ENCODE measurements at regions of chr21 and their contacts with region 1.

Region 1: GRCh38 chr21:25607151-25608043 is at the start of gene MRPL39:
- DNase-seq: peak; percentile 88
- H3K4me3 Mint-ChIP-seq: peak within 1 kb of the TSS; percentile 87
- H3K27ac Mint-ChIP-seq: peak within 1 kb of the TSS; percentile 97
- H3K4me1 Mint-ChIP-seq: peaks cover 16% of the 10 kb centered on the region
- H3K27me3 Mint-ChIP-seq: no peaks in the 10 kb centered on the region
- CTCF ChIP-seq: peak; percentile 68
- total RNA-seq, gene MRPL39: 29.2 and 37.1 TPM in 2 replicates

Region 2: GRCh38 chr21:25421327-25422028 is 185.9 kb before region 1 on chr21:
- CTCF ChIA-PET with region 1: interaction called, 3 read pairs
- POLR2A ChIA-PET with region 1: no interaction called
- intact Hi-C with region 1: loop called (anchors 1 kb)
- DNase-seq: peak; percentile 64
- H3K4me3 Mint-ChIP-seq: no peak overlapping the region
- H3K27ac Mint-ChIP-seq: no peak overlapping the region
- H3K4me1 Mint-ChIP-seq: peaks cover 10% of the 10 kb centered on the region
- H3K27me3 Mint-ChIP-seq: peaks cover 11% of the 10 kb centered on the region
- CTCF ChIP-seq: peak; percentile 55

Region 3: GRCh38 chr21:25515484-25516405 is 91.7 kb before region 1 on chr21:
- CTCF ChIA-PET with region 1: no interaction called
- POLR2A ChIA-PET with region 1: no interaction called
- intact Hi-C with region 1: no loop called
- DNase-seq: no peak
- H3K4me3 Mint-ChIP-seq: no peak overlapping the region
- H3K27ac Mint-ChIP-seq: no peak overlapping the region
- H3K4me1 Mint-ChIP-seq: peaks cover 9% of the 10 kb centered on the region
- H3K27me3 Mint-ChIP-seq: no peaks in the 10 kb centered on the region
- CTCF ChIP-seq: no peak

Region 4: DNA sequence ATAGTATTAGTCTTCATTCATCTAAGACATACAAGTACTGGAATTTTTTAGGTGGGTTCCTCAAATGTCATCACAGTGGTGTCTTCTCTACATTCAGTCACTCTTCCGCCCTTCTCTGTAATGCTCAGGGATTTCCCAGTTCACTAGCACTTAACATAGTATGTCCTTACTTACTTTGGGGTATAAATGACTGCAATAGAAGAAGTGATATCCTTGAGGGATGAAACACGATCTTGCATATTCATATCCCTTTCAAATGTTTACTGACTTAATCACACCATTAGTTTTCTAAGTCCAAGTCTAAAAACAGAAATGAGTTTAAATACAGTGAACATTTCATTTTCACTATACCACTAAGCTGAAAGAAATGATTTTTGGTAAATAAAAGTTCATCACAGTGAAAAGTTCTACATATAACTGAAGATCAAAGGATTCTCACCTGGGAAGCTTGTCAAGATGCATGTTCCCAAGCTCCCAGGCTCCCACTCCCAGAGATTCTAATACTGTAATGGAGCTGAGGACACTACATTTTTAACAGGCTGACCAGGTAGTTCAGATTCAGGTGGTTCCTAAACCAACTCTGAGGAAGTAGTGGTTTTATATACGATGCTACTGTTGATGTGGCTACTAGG is 29.9 kb before region 1 on chr21:
- CTCF ChIA-PET with region 1: no interaction called
- POLR2A ChIA-PET with region 1: no interaction called
- intact Hi-C with region 1: no loop called
- DNase-seq: no peak
- H3K4me3 Mint-ChIP-seq: no peak overlapping the region
- H3K27ac Mint-ChIP-seq: no peak overlapping the region
- H3K4me1 Mint-ChIP-seq: peaks cover 5% of the 10 kb centered on the region
- H3K27me3 Mint-ChIP-seq: no peaks in the 10 kb centered on the region
- CTCF ChIP-seq: no peak

Region 5: DNA sequence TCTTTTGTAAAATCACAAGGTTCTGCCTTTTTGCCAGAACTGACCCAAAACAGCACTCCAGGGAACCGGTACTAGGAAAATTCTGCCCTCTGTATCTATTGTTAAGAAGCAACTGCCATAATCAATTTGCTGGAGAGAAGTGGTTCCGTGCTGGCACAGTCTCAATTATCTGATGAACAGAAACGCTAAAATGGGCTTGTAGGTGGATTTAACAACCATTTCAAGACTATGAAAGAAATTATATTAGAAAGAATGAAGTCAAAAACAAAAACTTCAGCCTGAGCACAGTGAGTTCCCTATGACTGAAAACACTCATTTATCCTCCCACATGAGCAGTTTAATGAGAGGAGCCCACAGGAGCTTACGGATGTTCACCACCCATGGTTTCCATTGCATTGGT is 36.1 kb after region 1 on chr21:
- CTCF ChIA-PET with region 1: interaction called, 11 read pairs
- POLR2A ChIA-PET with region 1: no interaction called
- intact Hi-C with region 1: no loop called
- DNase-seq: no peak
- H3K4me3 Mint-ChIP-seq: no peak overlapping the region
- H3K27ac Mint-ChIP-seq: no peak overlapping the region
- H3K4me1 Mint-ChIP-seq: peaks cover 13% of the 10 kb centered on the region
- H3K27me3 Mint-ChIP-seq: peaks cover 24% of the 10 kb centered on the region
- CTCF ChIP-seq: no peak

Region 6: DNA sequence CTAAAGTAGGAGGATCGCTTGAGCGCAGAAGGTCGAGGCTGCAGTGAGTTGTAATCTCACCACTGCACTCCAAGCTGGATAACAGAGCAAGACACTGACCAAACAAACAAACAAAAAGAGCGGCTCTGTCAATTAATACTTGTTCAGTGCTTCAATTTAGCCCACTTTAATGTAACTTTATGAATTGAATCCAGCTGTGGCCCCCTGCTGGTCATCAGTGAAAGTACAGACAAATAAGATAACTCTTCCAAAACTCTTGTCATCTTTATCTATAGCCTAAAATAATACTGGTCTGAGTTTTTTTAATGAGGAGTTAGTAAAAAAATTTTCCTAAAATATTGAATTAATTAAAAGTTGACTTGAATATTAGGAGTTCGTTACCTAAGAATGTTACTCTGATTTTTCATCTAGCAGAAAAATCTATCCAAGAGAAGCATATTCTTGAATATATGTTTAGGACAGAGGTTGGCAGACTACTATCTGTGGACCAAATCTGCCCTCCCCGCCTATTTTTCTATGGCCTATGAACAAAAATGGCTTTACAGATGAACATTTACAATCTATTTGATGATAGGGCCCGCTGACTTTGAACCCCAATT is 101.2 kb after region 1 on chr21:
- CTCF ChIA-PET with region 1: interaction called, 63 read pairs
- POLR2A ChIA-PET with region 1: interaction called, 3 read pairs
- intact Hi-C with region 1: loop called (anchors 1 kb)
- DNase-seq: peak; percentile 57
- H3K4me3 Mint-ChIP-seq: no peak overlapping the region
- H3K27ac Mint-ChIP-seq: no peak overlapping the region
- H3K4me1 Mint-ChIP-seq: no peaks in the 10 kb centered on the region
- H3K27me3 Mint-ChIP-seq: no peaks in the 10 kb centered on the region
- CTCF ChIP-seq: peak; percentile 67

Region 7: DNA sequence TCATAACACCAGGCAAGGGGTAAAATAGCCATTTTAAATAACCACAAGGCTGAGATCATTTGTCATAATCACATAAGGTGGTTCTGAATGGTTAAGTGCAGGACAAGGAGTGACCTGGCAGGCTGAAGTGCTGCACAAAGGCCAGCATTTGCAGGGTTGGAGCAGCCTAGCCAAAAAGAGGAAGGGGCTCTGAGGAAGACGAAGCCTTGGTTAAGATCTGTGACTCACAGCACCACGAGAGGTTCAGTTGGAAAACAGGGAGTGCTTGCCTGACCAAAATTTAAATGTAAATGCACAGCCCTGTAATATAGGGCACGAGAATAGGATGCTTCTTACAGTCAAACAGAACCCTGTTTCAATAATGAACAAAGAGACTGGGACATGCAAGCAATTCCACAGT is 115.2 kb after region 1 on chr21:
- CTCF ChIA-PET with region 1: interaction called, 15 read pairs
- POLR2A ChIA-PET with region 1: interaction called, 6 read pairs
- intact Hi-C with region 1: no loop called
- DNase-seq: no peak
- H3K4me3 Mint-ChIP-seq: no peak overlapping the region
- H3K27ac Mint-ChIP-seq: no peak overlapping the region
- H3K4me1 Mint-ChIP-seq: peaks cover 4% of the 10 kb centered on the region
- H3K27me3 Mint-ChIP-seq: no peaks in the 10 kb centered on the region
- CTCF ChIP-seq: no peak

Region 8: DNA sequence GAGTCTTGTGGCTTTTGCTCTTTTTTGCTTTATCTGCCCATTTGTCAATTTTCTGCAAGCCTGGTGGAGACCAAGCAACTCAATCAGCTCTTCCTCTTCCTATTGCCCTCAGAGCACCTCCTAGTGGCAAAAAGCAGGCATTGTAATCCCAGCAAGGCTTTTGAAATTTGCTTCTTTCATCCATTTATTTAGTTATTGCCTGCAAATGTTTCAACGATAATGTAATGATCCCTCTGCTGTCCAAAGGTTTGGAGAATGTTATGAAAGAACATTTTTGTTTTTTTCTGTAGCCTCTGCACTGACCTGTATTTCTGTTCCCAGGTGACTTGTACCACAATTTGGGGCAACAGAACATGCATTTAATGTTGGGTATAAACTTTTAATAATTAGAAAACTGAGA is 255.2 kb after region 1 on chr21:
- CTCF ChIA-PET with region 1: interaction called, 6 read pairs
- POLR2A ChIA-PET with region 1: interaction called, 3 read pairs
- intact Hi-C with region 1: loop called (anchors 1 kb)
- DNase-seq: peak; percentile 50
- H3K4me3 Mint-ChIP-seq: no peak overlapping the region
- H3K27ac Mint-ChIP-seq: no peak overlapping the region
- H3K4me1 Mint-ChIP-seq: no peaks in the 10 kb centered on the region
- H3K27me3 Mint-ChIP-seq: no peaks in the 10 kb centered on the region
- CTCF ChIP-seq: peak; percentile 75

Region 9: DNA sequence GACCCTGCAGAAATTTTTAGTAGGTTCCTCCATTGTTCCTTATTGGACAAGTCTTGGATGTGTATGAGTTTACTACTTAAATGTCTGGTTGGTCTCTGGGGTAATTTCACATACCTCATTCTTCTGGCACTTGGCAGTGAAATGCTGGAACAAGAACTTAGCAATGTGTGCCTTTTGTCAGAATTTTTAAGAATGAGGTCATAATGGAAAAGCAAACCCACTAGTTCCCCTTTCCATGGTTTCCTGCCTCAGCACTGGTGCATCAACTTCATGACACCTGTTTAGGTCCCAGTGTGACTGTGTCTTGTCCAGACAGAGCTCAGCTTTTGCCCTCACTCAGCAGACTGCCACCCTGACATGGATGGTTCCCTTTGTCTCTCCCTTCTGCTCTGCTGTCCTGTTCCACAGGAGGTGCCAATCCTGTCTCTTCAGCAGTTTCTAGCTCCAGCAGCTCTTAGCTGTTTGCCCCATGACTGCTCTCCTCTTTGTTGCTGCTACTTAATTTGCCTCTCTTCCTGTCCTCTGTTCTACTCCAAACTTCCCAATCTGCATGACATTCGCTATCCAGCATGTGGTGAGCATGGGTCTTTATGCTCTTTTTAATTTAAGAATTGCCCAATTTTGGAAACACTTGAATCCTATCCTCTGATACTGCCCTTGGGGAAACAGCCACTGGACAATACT is 830.1 kb after region 1 on chr21:
- CTCF ChIA-PET with region 1: no interaction called
- POLR2A ChIA-PET with region 1: no interaction called
- intact Hi-C with region 1: no loop called
- DNase-seq: no peak
- H3K4me3 Mint-ChIP-seq: no peak overlapping the region
- H3K27ac Mint-ChIP-seq: no peak overlapping the region
- H3K4me1 Mint-ChIP-seq: no peaks in the 10 kb centered on the region
- H3K27me3 Mint-ChIP-seq: no peaks in the 10 kb centered on the region
- CTCF ChIP-seq: no peak